Aorta (tissue), 5 donors: ENCODE measurements at regions of chr11 and their contacts with region 1.

Region 1: GRCh38 chr11:69620683-69621290 is 20.2 kb upstream of the CCND1 start:
- DNase-seq: peak in 1 of 2 donors; percentile 12
- ATAC-seq: no peak
- H3K4me3 ChIP-seq: no peak overlapping the region
- H3K27ac ChIP-seq: no peak overlapping the region
- H3K4me1 ChIP-seq: no peaks in the 10 kb centered on the region
- H3K27me3 ChIP-seq: no peaks in the 10 kb centered on the region

Region 2: DNA sequence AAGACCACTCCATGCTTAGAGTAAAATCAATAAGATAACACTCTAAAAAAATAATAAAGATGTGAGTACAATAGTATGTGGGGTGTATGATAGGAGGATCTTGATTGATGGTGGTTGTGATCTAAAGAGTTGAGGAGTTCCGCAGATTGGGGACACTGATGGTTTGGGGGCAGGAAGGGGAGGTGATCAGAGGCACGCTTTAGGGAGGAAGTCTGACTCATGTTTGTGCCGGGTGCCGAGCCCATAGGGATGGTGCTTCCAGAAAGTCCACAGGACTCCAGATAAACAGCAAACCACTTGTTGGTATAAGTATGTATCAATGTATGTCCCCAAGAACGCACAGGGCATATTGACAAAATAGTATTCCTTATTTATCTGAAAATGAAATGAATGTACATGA is 111.8 kb before region 1 on chr11:
- intact Hi-C with region 1: loop called in 1 of 2 experiments (anchors 5 kb)
- DNase-seq: peak in 1 of 2 donors; percentile 20
- ATAC-seq: no peak
- H3K4me3 ChIP-seq: no peak overlapping the region
- H3K27ac ChIP-seq: no peak overlapping the region
- H3K4me1 ChIP-seq: no peaks in the 10 kb centered on the region
- H3K27me3 ChIP-seq: no peaks in the 10 kb centered on the region